ENCODE measurements at regions of chr5 and their contacts with region 1.

Region 1: GRCh38 chr5:151659001-151659754 is 27.5 kb downstream of the SPARC start:
- DNase-seq: peak; percentile 52

Region 2: DNA sequence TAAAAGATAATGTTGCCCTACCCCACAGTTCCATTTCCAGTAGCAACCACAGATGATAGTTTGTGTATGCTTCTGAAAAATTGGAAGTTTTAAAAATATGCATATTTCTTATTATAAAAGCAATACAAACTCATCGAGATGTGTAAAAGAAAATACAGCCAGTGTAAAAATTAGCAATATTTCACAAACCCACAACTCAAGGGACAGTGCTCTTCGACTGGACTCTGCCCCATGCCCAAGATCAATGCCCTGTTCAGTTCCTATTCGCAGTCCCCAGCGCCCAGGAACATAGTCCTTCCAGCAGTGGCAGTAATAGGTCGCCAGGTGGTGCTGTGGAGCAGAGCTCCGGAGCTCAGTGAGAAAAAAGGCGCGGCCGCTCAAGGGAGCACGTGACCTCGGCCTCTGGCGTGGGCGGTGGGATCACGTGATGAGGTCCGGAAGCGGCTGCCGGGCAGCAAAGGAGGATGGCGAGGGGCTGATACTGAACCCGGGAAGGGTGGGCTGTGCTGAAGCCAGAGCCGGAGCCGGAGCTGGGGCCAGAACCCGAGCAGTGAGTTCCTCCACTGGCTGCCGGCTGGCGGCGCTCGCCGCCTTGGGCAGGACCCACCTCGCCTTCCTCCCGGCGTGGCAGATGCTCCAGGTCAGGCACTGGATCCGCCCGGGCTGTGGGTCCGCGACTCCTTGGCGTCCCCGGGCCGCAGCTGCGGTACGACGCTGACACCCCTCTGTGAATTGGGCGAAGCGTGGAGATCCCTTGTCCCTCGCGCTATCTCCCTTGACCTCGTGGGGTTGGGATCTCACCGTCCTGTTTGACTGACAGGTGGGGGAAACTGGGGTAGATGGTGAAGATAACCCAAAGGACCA is 211.8 kb before region 1 on chr5 and contains the start of gene SLC36A1:
- in situ Hi-C with region 1: loop called (anchors 10 kb)
- DNase-seq: peak; percentile 85
- total RNA-seq, gene SLC36A1: 2.1 and 7.9 TPM in 2 replicates

Region 3: DNA sequence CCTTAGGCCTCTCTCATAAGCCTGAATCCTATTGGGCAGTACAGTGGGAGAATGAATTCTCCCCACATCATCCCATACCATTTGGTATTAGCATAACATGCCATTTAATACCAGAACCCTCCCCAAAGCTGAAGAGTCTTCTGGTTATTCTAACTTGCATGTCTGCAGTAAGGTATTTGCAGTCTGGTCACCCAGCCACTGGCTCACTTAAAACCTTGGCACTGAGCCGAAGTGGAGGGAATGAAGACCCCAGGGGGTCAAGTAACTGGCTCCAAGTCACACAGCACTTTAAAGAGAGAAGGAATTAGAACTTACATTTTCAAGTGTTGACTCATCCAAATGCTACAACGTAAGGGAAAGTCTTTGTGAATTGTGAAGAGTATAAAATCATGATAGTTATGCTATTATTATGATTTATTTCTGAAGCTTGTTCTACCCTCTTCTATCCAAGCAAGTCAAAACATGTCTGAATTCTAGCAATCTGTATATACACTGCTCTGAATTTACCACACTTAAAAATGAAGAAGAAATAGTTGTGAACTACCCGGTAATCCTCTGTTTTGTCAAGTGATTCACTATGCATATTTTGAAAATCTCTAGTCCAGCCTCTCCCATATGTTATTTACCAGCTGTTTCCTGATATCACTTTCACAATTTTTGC is 237.0 kb after region 1 on chr5:
- in situ Hi-C with region 1: no loop called
- DNase-seq: peak; percentile 53

Measured in Caki2 (cell line).